Gastrocnemius medialis (tissue), 4 donors: ENCODE measurements at regions of chr11 and their contacts with region 1.

Region 1: GRCh38 chr11:65013692-65014145 is 241 bp upstream of the ARL2 start:
- DNase-seq: peak; percentile 79 to 88
- ATAC-seq: peak; percentile 95
- H3K4me3 ChIP-seq: peak overlapping the region; percentile 78 to 99 (median 87)
- H3K27ac ChIP-seq: peak overlapping the region; percentile 95 to 100 (median 97)
- H3K4me1 ChIP-seq: peaks cover 14 to 18% of the 10 kb centered on the region in 2 donors
- H3K27me3 ChIP-seq: no peaks in the 10 kb centered on the region
- CTCF ChIP-seq: peak in 4 of 5 experiments; percentile 74 to 89 (median 82)
- POLR2A ChIP-seq: peak; percentile 43 to 57

Region 2: DNA sequence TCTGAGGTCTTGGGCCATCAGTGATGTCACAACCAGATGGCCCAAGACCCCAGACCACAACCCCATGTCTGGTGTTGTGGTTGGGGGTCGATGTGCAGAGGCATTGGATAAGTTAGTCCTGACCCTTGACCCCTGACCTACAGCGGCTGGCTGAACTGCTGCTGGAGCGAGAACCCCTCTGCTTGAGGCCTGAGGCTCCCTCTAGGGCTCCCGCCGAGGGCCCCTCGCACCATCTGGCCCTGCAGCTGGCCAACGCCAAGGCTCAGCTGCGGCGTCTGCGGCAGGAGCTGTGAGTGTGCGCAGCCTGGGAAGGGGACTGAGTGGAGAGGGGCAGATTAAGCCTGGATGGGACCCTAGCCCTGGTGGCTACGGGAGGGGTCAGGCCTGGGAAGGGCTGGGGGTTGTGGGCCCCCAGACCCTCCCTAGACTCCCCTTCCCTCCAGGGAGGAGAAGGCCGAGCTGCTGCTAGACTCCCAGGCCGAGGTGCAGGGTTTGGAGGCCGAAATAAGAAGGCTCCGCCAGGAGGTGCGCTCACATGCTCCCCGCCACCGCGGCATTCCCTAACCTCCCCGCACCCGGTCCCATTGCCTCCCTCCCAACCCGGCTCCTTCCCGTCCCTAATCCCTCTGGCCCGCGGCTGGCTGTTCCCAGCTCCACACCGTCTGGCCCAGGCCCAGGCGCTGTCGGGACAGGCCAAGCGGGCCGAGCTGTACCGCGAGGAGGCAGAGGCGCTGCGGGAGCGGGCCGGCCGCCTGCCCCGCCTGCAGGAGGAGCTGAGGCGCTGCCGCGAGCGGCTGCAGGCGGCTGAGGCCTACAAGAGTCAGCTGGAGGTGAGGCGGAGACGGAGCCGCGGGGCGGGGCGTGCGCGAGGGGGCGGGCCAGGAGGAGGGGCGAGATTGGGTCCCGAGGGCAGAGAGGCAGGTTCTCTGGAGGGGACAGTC is 671.6 kb before region 1 on chr11:
- in situ Hi-C with region 1: no loop called
- intact Hi-C with region 1: no loop called
- DNase-seq: peak; percentile 80 to 92
- ATAC-seq: peak; percentile 91 to 93
- H3K4me3 ChIP-seq: peak overlapping the region; percentile 40 to 80 (median 57)
- H3K27ac ChIP-seq: peak overlapping the region; percentile 80 to 91 (median 84)
- H3K4me1 ChIP-seq: peaks cover 0 to 4% of the 10 kb centered on the region in 2 donors
- H3K27me3 ChIP-seq: no peaks in the 10 kb centered on the region
- CTCF ChIP-seq: peak in 4 of 5 experiments; percentile 21 to 62 (median 38)
- POLR2A ChIP-seq: peak; percentile 44 to 47

Region 3: GRCh38 chr11:64916775-64917662 is 96.7 kb before region 1 on chr11 and contains the start of gene ATG2A:
- in situ Hi-C with region 1: no loop called
- intact Hi-C with region 1: loop called (anchors 5 kb)
- DNase-seq: peak; percentile 98 to 99
- ATAC-seq: peak; percentile 99
- H3K4me3 ChIP-seq: peak within 1 kb of the TSS; percentile 80 to 91 (median 90)
- H3K27ac ChIP-seq: peak within 1 kb of the TSS; percentile 84 to 88 (median 86)
- H3K4me1 ChIP-seq: peaks cover 24 to 27% of the 10 kb centered on the region in 2 donors
- H3K27me3 ChIP-seq: no peaks in the 10 kb centered on the region
- CTCF ChIP-seq: no peak
- POLR2A ChIP-seq: peak; percentile 87 to 88
- total RNA-seq, gene ATG2A: 10.7 to 97.5 (median 37.9) TPM

Region 4: DNA sequence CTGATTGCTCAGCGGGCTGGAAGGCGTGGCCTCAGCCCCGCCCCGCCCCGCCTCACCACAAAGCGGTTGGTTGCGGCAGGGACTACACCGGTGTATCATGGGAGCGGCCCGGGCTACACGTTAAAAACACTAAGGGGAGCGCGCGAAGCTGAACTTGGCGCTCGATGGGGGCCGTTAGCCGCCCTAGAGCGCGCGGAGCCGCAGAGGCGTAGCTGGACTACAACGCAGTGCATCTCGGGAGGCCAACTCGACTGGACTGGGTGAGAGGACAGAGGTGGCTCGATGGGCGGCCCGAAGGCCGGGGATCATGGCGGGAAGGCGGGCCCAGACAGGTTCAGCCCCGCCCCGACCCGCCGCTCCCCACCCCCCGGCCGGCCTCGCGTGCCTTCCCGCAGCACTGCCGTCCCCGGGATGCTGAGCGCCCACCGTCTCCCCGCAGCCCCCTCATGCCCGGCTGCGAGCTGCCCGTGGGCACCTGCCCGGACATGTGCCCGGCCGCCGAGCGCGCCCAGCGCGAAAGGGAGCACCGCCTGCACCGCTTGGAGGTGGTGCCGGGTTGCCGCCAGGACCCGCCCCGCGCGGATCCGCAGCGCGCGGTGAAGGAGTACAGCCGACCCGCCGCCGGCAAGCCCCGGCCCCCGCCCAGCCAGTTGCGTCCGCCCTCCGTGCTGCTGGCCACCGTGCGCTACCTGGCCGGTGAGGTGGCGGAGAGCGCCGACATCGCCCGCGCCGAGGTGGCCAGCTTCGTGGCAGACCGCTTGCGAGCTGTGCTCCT is 27.3 kb after region 1 on chr11 and contains the start of gene SAC3D1:
- in situ Hi-C with region 1: no loop called
- intact Hi-C with region 1: loop called (anchors 1 kb)
- DNase-seq: peak; percentile 73 to 89
- ATAC-seq: peak; percentile 96
- H3K4me3 ChIP-seq: peak within 1 kb of the TSS; percentile 56 to 94 (median 70)
- H3K27ac ChIP-seq: peak within 1 kb of the TSS; percentile 87 to 98 (median 92)
- H3K4me1 ChIP-seq: peaks cover 14 to 21% of the 10 kb centered on the region in 2 donors
- H3K27me3 ChIP-seq: no peaks in the 10 kb centered on the region
- CTCF ChIP-seq: no peak
- POLR2A ChIP-seq: peak; percentile 19 to 52
- total RNA-seq, gene SAC3D1: 9.0 to 27.2 (median 14.4) TPM

Region 5: GRCh38 chr11:65117216-65118096 is 103.7 kb after region 1 on chr11 and contains the start of gene ZNHIT2:
- in situ Hi-C with region 1: no loop called
- intact Hi-C with region 1: loop called (anchors 1 kb)
- DNase-seq: peak; percentile 99
- ATAC-seq: peak; percentile 83 to 85
- H3K4me3 ChIP-seq: peak within 1 kb of the TSS; percentile 85 to 99 (median 98)
- H3K27ac ChIP-seq: peak within 1 kb of the TSS; percentile 80 to 94 (median 88)
- H3K4me1 ChIP-seq: peaks cover 30 to 50% of the 10 kb centered on the region in 2 donors
- H3K27me3 ChIP-seq: no peaks in the 10 kb centered on the region
- CTCF ChIP-seq: peak; percentile 90 to 99 (median 96)
- POLR2A ChIP-seq: peak; percentile 47 to 57
- total RNA-seq, gene ZNHIT2: 10.3 to 30.7 (median 24.1) TPM